ENCODE measurements at regions of chr9 and their contacts with region 1.

Region 1: GRCh38 chr9:128818099-128818838 is at the start of gene ENDOG:
- DNase-seq: peak; percentile 98
- ATAC-seq: peak; percentile 94
- H3K4me3 Mint-ChIP-seq: peak within 1 kb of the TSS; percentile 83
- H3K27ac Mint-ChIP-seq: peak within 1 kb of the TSS; percentile 94
- H3K4me1 Mint-ChIP-seq: peaks cover 21% of the 10 kb centered on the region
- H3K27me3 Mint-ChIP-seq: no peaks in the 10 kb centered on the region
- total RNA-seq, gene ENDOG: 23.9 to 24.7 TPM

Region 2: GRCh38 chr9:128771745-128772519 is 46.3 kb before region 1 on chr9 and contains the start of gene ZER1:
- CTCF ChIA-PET with region 1: interaction called, 13 read pairs
- POLR2A ChIA-PET with region 1: interaction called, 5 read pairs
- DNase-seq: peak; percentile 94
- ATAC-seq: peak; percentile 95
- H3K4me3 Mint-ChIP-seq: peak within 1 kb of the TSS; percentile 94
- H3K27ac Mint-ChIP-seq: peak within 1 kb of the TSS; percentile 95
- H3K4me1 Mint-ChIP-seq: peaks cover 21% of the 10 kb centered on the region
- H3K27me3 Mint-ChIP-seq: no peaks in the 10 kb centered on the region
- total RNA-seq, gene ZER1: 15.3 to 15.9 TPM

Region 3: DNA sequence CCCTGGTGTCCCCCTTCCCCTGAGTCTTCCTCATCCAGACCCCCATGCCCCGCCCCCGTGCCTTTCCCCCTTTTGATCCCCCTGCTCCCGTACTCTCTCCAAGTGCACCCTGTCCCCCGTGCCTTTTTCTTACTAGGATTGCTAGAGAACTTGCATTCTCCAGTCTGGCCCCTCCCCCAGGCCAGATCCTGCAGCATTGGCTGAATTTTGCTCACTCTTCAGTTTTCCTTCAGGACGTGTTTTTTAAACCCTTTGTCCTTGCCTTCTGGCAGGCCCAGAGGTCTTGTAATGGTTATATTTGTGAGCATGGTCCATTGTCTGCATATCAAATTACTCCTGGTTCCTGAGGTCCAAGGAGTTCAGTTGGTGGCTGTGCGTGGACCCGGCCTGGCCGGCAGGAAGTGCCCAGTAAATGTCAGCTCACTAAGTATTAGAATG is 30.6 kb before region 1 on chr9:
- CTCF ChIA-PET with region 1: interaction called, 20 read pairs
- POLR2A ChIA-PET with region 1: interaction called, 6 read pairs
- DNase-seq: peak; percentile 28
- ATAC-seq: no peak
- H3K4me3 Mint-ChIP-seq: peak overlapping the region; percentile 95
- H3K27ac Mint-ChIP-seq: peak overlapping the region; percentile 89
- H3K4me1 Mint-ChIP-seq: peaks cover 21% of the 10 kb centered on the region
- H3K27me3 Mint-ChIP-seq: no peaks in the 10 kb centered on the region

Region 4: DNA sequence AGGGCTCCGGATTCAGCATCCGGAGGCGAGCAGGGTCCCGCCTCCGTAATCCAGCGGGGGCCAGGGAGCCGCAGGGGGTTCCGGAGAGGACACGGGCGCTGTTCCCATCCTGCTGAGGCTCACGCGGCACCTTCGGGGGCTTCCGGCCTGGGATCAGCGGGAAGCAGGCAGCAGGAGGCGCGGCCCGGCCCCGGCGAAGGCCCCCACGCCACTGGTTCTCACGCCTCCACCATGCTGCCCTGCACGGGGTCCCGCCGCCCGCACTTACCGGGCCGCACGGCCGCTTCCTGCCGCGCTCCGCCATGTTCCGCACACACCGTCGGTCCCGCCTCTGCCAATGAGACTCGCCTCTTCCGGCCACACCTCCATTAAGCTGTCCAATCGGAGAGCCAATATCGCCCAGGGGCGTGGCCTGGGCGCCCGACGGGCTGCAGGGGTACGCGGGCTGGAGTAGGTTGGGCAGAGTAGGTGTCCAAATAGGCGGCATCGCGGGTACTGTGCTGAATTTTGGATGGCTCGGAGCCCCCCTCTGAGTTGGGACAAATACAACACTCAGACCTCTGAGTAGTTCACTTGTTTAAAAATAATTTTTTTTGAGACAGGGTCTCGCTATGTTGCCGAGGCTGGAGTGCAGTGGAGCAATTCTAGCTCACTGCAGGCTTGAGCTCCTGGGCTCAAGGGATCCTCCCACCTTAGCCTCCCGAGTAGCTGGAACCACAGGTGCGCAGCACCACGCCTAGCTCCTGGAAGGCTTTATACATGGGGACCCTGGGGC is 11.4 kb after region 1 on chr9 and contains the start of gene SPOUT1:
- CTCF ChIA-PET with region 1: interaction called, 36 read pairs
- POLR2A ChIA-PET with region 1: interaction called, 15 read pairs
- DNase-seq: peak; percentile 95
- ATAC-seq: peak; percentile 98
- H3K4me3 Mint-ChIP-seq: peak within 1 kb of the TSS; percentile 95
- H3K27ac Mint-ChIP-seq: peak within 1 kb of the TSS; percentile 91
- H3K4me1 Mint-ChIP-seq: peaks cover 28% of the 10 kb centered on the region
- H3K27me3 Mint-ChIP-seq: no peaks in the 10 kb centered on the region
- total RNA-seq, gene SPOUT1: 77.3 to 81.2 TPM

Measured in activated CD8-positive, alpha-beta T cell treated with anti-CD3 and anti-CD28 coated beads, Interleukin-2, amount 10 ng/mL, durations not matched to agents 7 days and 5 days (primary cell).